HEK293 (cell line): ENCODE measurements at regions of chr21 and their contacts with region 1.

Region 1: GRCh38 chr21:35840197-35840799 is 220.0 kb downstream of the SETD4 start:
- H3K4me3 ChIP-seq: no peak overlapping the region
- H3K27ac ChIP-seq: no peak overlapping the region
- H3K4me1 ChIP-seq: no peaks in the 10 kb centered on the region
- CTCF ChIP-seq: peak; percentile 50

Region 2: DNA sequence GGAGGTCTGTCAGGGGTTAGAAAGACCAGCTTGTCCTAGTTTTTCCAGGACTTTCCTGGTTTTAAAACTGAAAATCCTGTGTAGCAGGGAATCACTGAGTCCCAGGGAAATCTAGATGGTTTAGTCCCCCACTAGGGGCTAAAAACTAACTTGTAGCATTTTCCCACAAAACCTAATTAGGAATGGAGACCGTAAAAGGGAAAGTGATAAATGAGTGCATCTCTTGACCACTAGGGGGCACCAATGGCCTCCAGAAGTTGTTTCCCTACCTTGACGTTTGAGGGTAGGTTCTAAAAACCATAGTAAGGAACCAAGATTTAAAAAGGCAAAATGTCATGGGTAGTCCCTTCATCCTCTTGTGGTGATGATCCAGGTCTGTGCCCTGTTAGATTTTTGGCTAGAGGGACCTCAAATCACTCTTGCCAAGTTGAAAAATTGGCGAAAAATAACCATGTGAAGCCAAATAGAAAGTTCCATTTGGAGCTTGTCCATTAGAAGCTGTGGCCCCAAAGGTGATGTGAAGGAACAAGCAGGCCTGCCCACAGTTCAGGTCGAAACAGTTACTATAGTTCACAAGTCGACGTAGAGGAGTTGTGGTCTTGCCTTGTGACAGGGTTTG is 1147.0 kb before region 1 on chr21:
- CTCF ChIA-PET with region 1: interaction called, 14 read pairs
- POLR2A ChIA-PET with region 1: no interaction called
- H3K4me3 ChIP-seq: no peak overlapping the region
- H3K27ac ChIP-seq: no peak overlapping the region
- H3K4me1 ChIP-seq: no peaks in the 10 kb centered on the region
- CTCF ChIP-seq: peak; percentile 57; the same call in 1 of the 2 replicates

Region 3: GRCh38 chr21:35814858-35815619 is 25.3 kb before region 1 on chr21:
- CTCF ChIA-PET with region 1: no interaction called
- POLR2A ChIA-PET with region 1: no interaction called
- H3K4me3 ChIP-seq: no peak overlapping the region
- H3K27ac ChIP-seq: no peak overlapping the region
- H3K4me1 ChIP-seq: no peaks in the 10 kb centered on the region
- CTCF ChIP-seq: no peak

Region 4: GRCh38 chr21:35860189-35860869 is 20.0 kb after region 1 on chr21:
- CTCF ChIA-PET with region 1: no interaction called
- POLR2A ChIA-PET with region 1: no interaction called
- H3K4me3 ChIP-seq: no peak overlapping the region
- H3K27ac ChIP-seq: no peak overlapping the region
- H3K4me1 ChIP-seq: no peaks in the 10 kb centered on the region
- CTCF ChIP-seq: no peak

Region 5: DNA sequence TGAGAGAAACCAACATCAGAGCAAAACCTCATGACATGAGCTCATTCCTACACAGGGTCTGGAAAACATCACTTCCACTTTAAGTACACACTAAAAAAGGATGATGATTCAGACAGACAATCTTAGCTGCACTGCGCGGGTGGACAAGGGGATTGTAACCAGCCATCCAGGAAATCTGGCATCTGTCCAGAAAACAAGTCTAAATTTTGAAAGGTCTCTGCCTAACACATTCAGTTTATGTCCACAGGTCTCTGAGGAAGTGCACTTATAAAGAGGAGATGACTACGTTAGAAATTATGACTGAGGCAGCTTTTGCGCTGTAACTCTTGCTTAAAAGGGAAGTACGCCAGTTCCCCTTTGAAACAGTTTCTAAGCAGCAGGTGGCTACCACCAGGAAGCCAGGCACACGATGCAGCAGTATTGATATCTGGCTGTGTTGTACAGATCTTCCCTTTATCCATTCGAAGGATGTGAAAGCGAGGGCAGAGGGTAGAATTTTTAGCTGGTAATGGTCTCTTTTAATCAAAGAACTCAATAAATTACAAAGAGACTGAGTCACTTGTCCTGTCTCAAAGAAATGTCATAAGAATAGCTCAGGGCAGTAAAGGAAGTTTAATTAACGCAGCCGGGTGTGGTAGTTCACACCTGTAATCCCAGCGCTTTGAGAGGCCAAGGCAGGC is 92.1 kb after region 1 on chr21:
- CTCF ChIA-PET with region 1: interaction called, 10 read pairs
- POLR2A ChIA-PET with region 1: no interaction called
- H3K4me3 ChIP-seq: peak overlapping the region; percentile 2; the same call in 1 of the 2 replicates
- H3K27ac ChIP-seq: no peak overlapping the region; the same call in 1 of the 2 replicates
- H3K4me1 ChIP-seq: peaks cover 4% of the 10 kb centered on the region
- CTCF ChIP-seq: no peak